ENCODE measurements at regions of chr5 and their contacts with region 1.

Region 1: DNA sequence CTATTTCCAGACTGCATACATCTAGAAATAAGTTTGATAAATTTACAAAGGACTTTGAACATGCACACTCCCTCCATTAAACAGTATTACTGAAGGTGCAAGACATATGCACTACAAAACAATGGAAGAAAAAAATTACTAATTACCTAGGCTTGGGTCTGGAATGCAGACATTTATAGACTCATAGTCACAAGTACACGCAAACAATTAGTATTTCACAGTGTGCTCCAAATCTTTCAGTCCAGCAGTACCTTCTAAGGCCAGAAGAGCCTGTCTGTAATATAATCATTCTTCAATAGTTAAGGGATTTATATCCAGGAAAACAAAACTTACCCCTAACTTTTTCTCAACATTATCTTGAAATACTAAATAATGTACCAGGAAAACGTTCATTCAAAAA is 11.2 kb downstream of the RICTOR start:
- DNase-seq: no peak
- H3K4me3 ChIP-seq: no peak overlapping the region
- H3K27ac ChIP-seq: no peak overlapping the region
- H3K4me1 ChIP-seq: peaks cover 18 to 25% of the 10 kb centered on the region in 2 donors
- H3K27me3 ChIP-seq: no peaks in the 10 kb centered on the region
- CTCF ChIP-seq: no peak
- POLR2A ChIP-seq: no peak

Region 2: DNA sequence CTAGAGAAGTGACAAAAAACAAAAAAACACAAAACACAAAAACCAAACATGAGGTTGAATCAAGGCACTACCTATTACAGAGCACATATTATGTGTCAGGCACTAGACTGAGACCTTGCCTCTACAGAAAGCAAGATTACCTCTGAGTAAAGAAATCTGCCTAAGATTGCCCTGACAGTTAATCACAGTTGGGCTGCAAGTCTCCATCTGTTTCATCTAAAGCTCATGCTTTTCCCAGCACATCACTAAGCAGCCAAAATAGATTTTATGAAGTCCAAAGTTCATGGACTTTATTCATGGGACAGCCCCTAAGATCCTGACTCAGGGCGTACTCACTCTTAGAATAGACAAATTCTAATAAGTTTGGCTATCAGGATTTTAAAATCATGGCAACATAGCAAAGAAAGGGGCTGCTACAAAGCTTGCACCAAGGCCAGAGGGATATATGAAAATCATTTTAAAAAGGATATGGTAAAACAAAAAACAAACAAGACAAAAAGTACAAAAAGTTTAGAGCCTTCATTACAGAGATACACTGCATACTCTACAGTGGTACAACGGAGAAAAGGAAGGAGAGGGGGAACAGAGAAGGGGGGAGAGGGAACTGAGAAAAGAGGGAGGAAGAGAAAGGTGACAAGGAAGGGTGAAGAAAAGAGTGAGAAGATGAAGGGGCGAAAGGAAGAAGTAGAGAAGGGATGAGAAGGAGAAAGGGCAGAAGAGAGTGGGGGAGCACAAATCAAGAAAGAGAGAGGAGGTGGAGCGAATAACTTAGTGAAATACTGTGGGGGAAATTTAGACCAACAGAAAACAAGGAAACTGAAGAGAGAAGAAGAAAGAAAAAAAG is 47.1 kb before region 1 on chr5:
- intact Hi-C with region 1: loop called in 1 of 2 experiments (anchors 10 kb)
- DNase-seq: peak in 3 of 7 donors; percentile 22 to 29 (median 27)
- H3K4me3 ChIP-seq: no peak overlapping the region
- H3K27ac ChIP-seq: peak overlapping the region in 3 of 5 donors; percentile 35 to 62 (median 48)
- H3K4me1 ChIP-seq: peaks cover 11 to 18% of the 10 kb centered on the region in 2 donors
- H3K27me3 ChIP-seq: no peaks in the 10 kb centered on the region
- CTCF ChIP-seq: no peak
- POLR2A ChIP-seq: no peak

Region 3: GRCh38 chr5:39117401-39117800 is 54.4 kb after region 1 on chr5:
- intact Hi-C with region 1: no loop called
- DNase-seq: no peak
- H3K4me3 ChIP-seq: no peak overlapping the region
- H3K27ac ChIP-seq: no peak overlapping the region
- H3K4me1 ChIP-seq: peaks cover 0 to 3% of the 10 kb centered on the region in 2 donors
- H3K27me3 ChIP-seq: no peaks in the 10 kb centered on the region
- CTCF ChIP-seq: no peak
- POLR2A ChIP-seq: no peak

Region 4: GRCh38 chr5:39447059-39447458 is 384.0 kb after region 1 on chr5:
- intact Hi-C with region 1: no loop called
- DNase-seq: no peak
- H3K4me3 ChIP-seq: no peak overlapping the region
- H3K27ac ChIP-seq: no peak overlapping the region
- H3K4me1 ChIP-seq: peaks cover 4 to 8% of the 10 kb centered on the region in 2 donors
- H3K27me3 ChIP-seq: no peaks in the 10 kb centered on the region
- CTCF ChIP-seq: no peak
- POLR2A ChIP-seq: no peak

Measured in adrenal gland (tissue), 19 donors.